ENCODE measurements at regions of chr17 and their contacts with region 1.

Region 1: DNA sequence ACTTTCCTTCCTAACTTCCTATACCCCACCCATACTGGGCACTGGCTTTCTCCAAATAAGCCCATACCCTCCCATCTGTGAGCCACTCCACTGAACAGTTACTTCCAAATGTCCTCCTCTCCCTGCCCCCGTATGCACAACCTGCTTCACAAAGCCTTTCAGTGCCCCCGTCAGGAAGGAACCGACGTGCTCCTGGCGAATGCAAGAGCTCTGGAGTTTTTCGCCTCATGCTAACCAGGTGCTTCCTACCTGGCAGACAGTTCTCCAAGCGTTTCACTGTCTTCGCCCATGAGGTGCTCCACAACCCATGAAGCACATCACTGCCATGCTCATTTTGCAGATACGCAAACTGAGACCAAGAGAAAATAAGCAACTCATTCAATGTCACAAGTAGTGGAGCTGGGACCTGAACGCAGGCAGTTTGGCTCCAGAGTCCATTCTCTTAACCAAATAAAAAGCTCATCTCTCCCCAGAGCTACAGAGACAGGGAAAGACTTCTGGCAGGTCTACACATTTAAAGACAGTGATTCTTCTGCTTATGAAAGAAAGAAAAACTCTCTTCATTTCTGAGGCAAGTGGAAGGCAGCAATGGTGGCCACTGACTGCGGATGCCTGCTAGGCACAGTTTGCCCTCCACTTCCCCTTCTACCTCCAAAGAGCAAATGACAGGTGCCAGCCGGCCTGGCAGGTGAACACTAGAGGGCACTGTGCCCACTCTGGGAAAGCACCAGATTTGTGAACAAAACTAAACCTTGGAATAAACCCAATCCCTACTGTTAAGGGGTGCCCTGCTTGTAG is 23.8 kb downstream of the SPHK1 start:
- DNase-seq: peak; percentile 74
- H3K4me3 Mint-ChIP-seq: no peak overlapping the region
- H3K27ac Mint-ChIP-seq: no peak overlapping the region
- H3K4me1 Mint-ChIP-seq: peaks cover 5% of the 10 kb centered on the region
- H3K27me3 Mint-ChIP-seq: no peaks in the 10 kb centered on the region

Region 2: DNA sequence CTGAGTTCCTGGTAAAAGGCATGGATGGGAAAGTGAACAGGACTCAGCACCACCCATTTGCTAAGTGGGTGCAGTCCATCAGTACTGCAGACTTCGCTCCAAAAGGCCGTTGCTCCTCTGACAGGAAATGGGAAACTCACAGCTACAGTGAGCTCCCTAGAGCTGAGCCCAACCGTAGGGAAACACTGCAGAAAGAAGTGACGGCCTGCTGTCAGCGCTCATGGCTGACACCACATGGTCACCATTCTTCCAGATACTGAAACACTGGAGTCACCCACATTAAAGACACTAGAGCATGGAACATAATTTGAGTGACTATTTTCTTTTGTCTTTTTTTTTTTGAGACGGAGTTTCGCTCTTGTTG is 12.8 kb after region 1 on chr17:
- CTCF ChIA-PET with region 1: interaction called, 13 read pairs
- POLR2A ChIA-PET with region 1: no interaction called
- DNase-seq: no peak
- H3K4me3 Mint-ChIP-seq: no peak overlapping the region
- H3K27ac Mint-ChIP-seq: no peak overlapping the region
- H3K4me1 Mint-ChIP-seq: peaks cover 4% of the 10 kb centered on the region
- H3K27me3 Mint-ChIP-seq: no peaks in the 10 kb centered on the region

Region 3: GRCh38 chr17:76506408-76507349 is 98.4 kb after region 1 on chr17:
- CTCF ChIA-PET with region 1: interaction called, 37 read pairs
- POLR2A ChIA-PET with region 1: no interaction called
- DNase-seq: peak; percentile 90
- H3K4me3 Mint-ChIP-seq: no peak overlapping the region
- H3K27ac Mint-ChIP-seq: no peak overlapping the region
- H3K4me1 Mint-ChIP-seq: peaks cover 40% of the 10 kb centered on the region
- H3K27me3 Mint-ChIP-seq: peaks cover 8% of the 10 kb centered on the region